RWPE1 (cell line): ENCODE measurements at regions of chr16 and their contacts with region 1.

Region 1: DNA sequence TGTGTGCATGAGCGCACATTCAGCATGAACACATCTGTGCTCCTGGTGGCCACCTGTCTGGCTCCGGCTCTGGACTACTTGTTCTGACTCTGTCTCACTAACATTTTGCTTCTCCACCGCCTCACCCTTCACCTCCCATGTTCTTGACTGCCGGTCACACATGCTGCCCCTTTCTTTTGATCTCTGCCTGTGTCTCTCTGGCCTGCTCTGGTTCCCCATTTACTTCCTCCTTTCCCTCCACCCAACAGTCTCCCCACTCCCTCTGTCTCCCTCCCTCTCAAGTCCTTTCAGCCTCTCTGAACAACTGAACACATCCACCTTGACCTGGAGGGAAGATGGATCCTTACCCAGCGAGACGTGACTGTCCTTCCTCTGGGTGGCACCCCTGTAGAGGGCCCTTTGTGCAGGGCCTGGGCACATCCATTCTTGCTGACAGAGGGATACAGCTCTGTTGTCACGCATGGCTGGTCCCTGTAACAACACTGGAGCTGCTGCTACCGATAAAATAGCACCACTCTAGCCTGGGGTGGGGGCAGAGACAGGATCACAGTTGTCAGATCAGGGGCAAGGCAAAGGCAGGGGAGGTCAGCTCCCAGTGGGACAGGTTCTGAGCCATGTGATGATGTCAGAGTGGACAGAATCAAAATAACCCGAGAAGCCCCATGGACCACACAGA is 11.0 kb downstream of the ZSCAN32 start:
- DNase-seq: no peak
- H3K27ac ChIP-seq: no peak overlapping the region
- CTCF ChIP-seq: no peak

Region 2: DNA sequence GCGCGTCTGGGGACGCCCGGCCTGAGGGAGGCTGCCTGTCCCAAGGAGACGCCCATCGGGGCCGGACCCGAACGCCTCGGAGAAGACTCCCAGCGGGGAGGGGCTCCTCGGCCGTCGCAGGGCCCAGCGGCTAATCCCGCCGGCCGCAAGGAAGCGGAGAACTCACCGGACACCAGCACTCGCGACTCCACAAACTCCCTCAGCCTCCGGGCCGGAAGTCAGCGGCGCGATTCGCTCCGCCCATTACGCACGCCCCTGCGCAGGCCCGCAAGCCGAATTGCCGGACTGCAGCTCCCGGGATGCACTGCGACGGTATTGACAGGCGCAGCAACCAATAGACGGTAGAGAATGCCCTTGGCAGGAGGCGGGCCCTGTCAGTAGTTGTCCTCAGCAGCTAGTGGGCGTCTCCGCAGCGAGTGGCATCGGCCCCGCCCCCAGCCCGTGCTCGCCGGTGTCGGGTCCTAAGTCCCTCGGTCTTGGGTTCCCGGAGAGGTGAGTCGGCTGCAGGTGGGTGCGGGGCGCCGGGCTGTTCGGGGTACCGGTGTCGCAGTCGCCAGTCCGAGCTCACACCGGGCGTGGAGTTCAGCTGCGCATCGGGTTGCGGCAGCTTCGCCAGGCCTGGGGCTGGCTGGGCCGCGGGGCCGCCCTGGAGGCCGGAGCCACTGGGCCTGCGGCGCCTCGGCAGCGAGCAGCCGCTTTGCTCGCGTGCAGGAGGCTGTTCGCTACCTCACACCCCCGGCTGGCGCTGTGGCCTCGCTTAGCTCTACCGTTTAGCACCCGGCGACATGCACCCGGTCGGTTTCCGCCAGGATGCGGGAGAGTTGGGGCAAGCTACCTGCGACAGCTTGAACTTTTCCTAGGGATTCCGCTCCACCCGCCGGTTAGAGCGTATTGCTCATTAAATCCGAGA is 11.2 kb after region 1 on chr16 and contains the starts of genes ZNF174 and ZSCAN32:
- CTCF ChIA-PET with region 1: interaction called, 10 read pairs
- POLR2A ChIA-PET with region 1: no interaction called
- DNase-seq: peak; percentile 100
- H3K27ac ChIP-seq: peak within 1 kb of the TSS; percentile 89
- CTCF ChIP-seq: no peak